ENCODE measurements at regions of chr11 and their contacts with region 1.

Region 1: DNA sequence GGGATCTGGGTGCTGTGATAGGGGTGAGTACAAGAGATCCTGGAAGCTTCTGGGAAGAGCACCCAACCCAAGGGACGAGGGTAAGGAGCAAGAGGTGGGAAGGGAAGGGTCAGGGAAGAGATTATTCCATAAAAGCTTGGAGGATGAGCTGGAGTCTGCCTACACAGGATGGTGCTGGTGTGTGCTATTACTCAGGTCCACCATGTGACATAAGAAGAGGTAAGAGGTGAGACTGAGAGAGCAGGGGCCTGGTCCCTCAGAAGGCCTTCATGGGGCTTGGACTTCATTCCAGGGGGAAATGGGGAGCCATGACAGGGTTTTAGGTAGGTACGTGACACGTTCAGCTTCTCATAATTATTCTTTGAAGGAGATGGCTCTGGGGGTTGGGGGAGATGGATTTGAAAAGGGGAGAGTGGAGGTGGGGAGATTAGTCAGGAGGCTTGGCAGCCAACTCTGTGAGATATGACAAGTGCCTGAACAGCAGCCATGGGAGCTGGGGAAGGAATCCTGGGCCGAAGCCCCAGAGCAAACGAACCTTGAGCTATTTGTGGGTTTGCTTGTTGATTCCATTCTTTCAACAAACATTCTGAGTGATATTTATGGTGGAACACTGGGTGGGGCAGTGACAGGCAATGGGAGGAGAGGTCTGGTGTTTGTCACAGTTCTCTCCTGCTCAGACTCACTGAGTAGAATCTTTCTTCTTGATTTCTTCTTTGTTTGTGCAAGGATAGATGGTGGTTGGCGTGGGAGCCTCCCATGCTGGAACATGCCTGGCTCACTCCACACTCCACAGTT is 11.2 kb upstream of the NCAM1 start:
- DNase-seq: no peak
- ATAC-seq: no peak
- H3K4me3 ChIP-seq: no peak overlapping the region
- H3K4me3 Mint-ChIP-seq: no peak overlapping the region
- H3K27ac ChIP-seq: no peak overlapping the region
- H3K27ac Mint-ChIP-seq: no peak overlapping the region
- H3K4me1 ChIP-seq: no peaks in the 10 kb centered on the region
- H3K4me1 Mint-ChIP-seq: no peaks in the 10 kb centered on the region
- H3K27me3 ChIP-seq: peaks cover 3 to 11% of the 10 kb centered on the region in 2 experiments
- H3K27me3 Mint-ChIP-seq: peaks cover 73% of the 10 kb centered on the region
- CTCF ChIP-seq: no peak

Region 2: GRCh38 chr11:111194860-111195568 is 1755.0 kb before region 1 on chr11:
- CTCF ChIA-PET with region 1: no interaction called
- POLR2A ChIA-PET with region 1: no interaction called
- intact Hi-C with region 1: no loop called
- DNase-seq: no peak
- ATAC-seq: no peak
- H3K4me3 ChIP-seq: no peak overlapping the region
- H3K4me3 Mint-ChIP-seq: no peak overlapping the region
- H3K27ac ChIP-seq: no peak overlapping the region
- H3K27ac Mint-ChIP-seq: no peak overlapping the region
- H3K4me1 ChIP-seq: no peaks in the 10 kb centered on the region
- H3K4me1 Mint-ChIP-seq: no peaks in the 10 kb centered on the region
- H3K27me3 ChIP-seq: no peaks in the 10 kb centered on the region
- H3K27me3 Mint-ChIP-seq: peaks cover 5% of the 10 kb centered on the region
- CTCF ChIP-seq: no peak

Region 3: DNA sequence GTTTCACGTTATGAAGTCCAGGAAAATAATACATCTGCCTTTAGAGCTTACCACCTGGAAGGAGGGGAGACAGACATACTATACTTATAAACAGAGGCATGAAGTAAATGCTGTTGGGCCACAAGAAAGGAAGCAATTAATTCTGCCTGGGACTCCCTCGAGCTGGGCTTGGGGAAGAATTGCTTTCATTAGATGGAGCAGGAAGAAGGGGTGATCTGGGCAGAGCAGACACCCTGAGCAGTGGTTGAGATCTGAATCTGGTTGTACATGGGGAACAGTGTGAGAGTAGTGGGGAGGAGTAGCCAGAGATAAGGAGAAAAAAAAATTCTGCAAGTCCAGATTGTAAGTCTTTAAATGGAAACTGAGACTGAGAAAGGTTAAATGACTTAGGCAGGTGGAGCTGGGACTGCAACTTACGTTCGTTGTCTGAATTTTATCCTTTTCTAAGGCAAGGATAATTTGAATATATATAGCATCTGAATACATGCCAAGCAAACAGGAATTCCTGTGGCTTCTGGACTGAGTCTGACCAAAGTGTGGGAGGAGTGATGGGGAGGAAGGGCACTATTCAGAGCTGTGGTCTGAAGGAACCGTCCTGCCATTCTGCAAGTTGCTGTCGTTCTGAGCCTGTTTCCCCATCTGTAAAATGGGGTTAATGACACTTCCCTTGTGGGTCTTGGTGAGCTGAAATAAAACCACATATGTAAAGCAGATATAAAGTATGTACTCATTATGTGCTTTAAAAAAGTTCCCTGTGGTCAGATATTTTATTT is 19.1 kb after region 1 on chr11:
- CTCF ChIA-PET with region 1: no interaction called
- POLR2A ChIA-PET with region 1: no interaction called
- intact Hi-C with region 1: loop called in 1 of 2 experiments (anchors 2 kb)
- DNase-seq: no peak
- ATAC-seq: no peak
- H3K4me3 ChIP-seq: no peak overlapping the region
- H3K4me3 Mint-ChIP-seq: no peak overlapping the region
- H3K27ac ChIP-seq: no peak overlapping the region
- H3K27ac Mint-ChIP-seq: no peak overlapping the region
- H3K4me1 ChIP-seq: no peaks in the 10 kb centered on the region
- H3K4me1 Mint-ChIP-seq: peaks cover 3% of the 10 kb centered on the region
- H3K27me3 ChIP-seq: peaks cover 5 to 16% of the 10 kb centered on the region in 2 experiments
- H3K27me3 Mint-ChIP-seq: peaks cover 33% of the 10 kb centered on the region
- CTCF ChIP-seq: no peak

Measured in CD4-positive, alpha-beta T cell (primary cell).